Endothelial cell of umbilical vein (primary cell): ENCODE measurements at regions of chr5 and their contacts with region 1.

Region 1: DNA sequence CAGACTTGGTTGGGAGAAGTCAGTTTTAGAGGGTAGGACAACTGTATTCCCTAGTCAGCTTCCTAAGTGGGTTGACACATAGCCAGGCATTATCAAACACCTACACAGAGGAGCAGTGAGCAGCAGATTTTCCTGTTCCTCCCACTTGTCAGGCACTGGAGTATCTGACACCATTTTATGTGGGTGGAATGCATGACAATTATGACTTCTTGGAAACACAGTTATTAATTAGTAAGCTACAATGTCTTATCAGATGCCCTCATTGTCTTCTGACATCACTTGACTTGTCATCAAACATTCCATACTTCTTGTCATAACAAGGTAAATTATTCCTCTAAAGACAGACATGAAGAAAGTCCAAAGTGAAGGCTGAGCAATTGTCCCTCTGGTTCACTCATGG is 124.9 kb downstream of the IRX2 start:
- DNase-seq: no peak
- H3K4me3 ChIP-seq: no peak overlapping the region
- H3K27ac ChIP-seq: no peak overlapping the region
- H3K4me1 ChIP-seq: no peaks in the 10 kb centered on the region
- H3K27me3 ChIP-seq: no peaks in the 10 kb centered on the region
- CTCF ChIP-seq: no peak
- POLR2A ChIP-seq: no peak

Region 2: DNA sequence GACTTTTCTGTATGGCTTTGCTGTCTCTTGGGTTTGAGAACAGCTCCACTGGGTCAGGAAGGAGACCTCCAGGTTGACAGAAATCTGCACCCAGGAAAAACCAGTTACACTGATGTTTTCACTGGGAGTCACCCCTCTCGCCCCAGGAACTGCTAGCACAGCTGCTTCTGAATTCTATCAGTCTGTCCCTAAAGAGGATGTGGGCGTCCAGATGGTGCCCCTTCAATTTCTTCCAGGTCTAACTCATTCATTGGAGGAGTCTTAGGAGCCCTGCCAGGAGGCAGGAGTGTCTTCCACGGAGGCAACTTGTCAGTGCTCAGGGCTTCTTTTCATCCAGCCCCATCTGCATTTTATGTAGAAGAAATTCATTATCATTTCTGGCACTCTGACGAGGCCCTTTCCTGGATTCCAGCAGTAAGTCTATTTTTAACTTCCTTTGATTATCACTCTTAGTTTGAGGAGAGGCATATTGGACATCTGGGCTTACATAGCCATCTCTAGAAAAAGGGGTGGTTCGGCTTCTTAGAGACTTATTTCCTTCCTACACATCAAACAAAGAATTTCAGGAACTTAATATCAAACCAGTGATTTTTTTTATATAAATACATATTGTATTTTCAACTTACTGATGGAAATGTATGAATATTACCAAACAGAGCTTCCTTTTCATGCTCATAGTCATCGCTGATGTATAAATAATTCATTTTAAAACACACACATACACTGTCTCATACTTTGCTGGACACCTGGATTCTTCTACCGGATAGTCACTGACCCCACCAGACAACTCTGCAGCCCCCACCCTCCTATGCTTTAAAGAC is 23.9 kb before region 1 on chr5:
- CTCF ChIA-PET with region 1: no interaction called
- POLR2A ChIA-PET with region 1: no interaction called
- dilution Hi-C with region 1: no loop called
- intact Hi-C with region 1: loop called (anchors 1 kb)
- DNase-seq: no peak
- H3K4me3 ChIP-seq: no peak overlapping the region
- H3K27ac ChIP-seq: no peak overlapping the region
- H3K4me1 ChIP-seq: no peaks in the 10 kb centered on the region
- H3K27me3 ChIP-seq: no peaks in the 10 kb centered on the region
- CTCF ChIP-seq: no peak
- POLR2A ChIP-seq: no peak